Activated CD4-positive, alpha-beta T cell treated with anti-CD3 and anti-CD28 coated beads for 36 hours (primary cell): ENCODE measurements at regions of chr14 and their contacts with region 1.

Region 1: GRCh38 chr14:61662437-61663311 is 32.6 kb upstream of the HIF1A start:
- DNase-seq: peak; percentile 73
- ATAC-seq: peak; percentile 84
- H3K4me3 Mint-ChIP-seq: peak overlapping the region; percentile 46
- H3K27ac Mint-ChIP-seq: peak overlapping the region; percentile 91
- H3K4me1 Mint-ChIP-seq: peaks cover 67% of the 10 kb centered on the region
- H3K27me3 Mint-ChIP-seq: no peaks in the 10 kb centered on the region

Region 2: GRCh38 chr14:61178226-61179060 is 484.2 kb before region 1 on chr14:
- CTCF ChIA-PET with region 1: no interaction called
- POLR2A ChIA-PET with region 1: no interaction called
- intact Hi-C with region 1: loop called in 1 of 2 experiments (anchors 5 kb)
- DNase-seq: peak; percentile 85
- ATAC-seq: peak; percentile 82
- H3K4me3 Mint-ChIP-seq: peak overlapping the region; percentile 38
- H3K27ac Mint-ChIP-seq: peak overlapping the region; percentile 88
- H3K4me1 Mint-ChIP-seq: peaks cover 52% of the 10 kb centered on the region
- H3K27me3 Mint-ChIP-seq: peaks cover 4% of the 10 kb centered on the region

Region 3: DNA sequence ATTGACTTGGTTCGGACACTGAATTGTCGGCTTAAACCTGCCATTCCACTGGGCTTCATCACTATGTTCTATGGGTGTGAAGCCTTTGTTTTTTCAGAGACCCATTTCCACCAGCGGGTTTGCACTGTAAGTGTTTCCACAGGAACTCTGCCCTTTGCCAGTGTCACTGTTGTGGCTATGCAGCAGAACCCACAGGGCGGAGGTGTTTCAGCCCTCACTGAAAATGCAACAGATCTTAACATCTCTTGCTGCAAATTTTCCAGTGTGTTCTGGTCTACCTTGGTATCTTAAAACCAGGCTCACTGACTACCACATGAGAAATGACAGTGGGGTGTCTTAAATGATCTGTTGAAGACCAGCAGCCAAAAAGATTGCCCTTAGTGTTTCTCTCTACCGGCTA is 320.2 kb before region 1 on chr14:
- CTCF ChIA-PET with region 1: no interaction called
- POLR2A ChIA-PET with region 1: no interaction called
- intact Hi-C with region 1: loop called in 1 of 2 experiments (anchors 2 kb)
- DNase-seq: peak; percentile 91
- ATAC-seq: peak; percentile 60
- H3K4me3 Mint-ChIP-seq: peak overlapping the region; percentile 86
- H3K27ac Mint-ChIP-seq: peak overlapping the region; percentile 99
- H3K4me1 Mint-ChIP-seq: peaks cover 94% of the 10 kb centered on the region
- H3K27me3 Mint-ChIP-seq: no peaks in the 10 kb centered on the region

Region 4: DNA sequence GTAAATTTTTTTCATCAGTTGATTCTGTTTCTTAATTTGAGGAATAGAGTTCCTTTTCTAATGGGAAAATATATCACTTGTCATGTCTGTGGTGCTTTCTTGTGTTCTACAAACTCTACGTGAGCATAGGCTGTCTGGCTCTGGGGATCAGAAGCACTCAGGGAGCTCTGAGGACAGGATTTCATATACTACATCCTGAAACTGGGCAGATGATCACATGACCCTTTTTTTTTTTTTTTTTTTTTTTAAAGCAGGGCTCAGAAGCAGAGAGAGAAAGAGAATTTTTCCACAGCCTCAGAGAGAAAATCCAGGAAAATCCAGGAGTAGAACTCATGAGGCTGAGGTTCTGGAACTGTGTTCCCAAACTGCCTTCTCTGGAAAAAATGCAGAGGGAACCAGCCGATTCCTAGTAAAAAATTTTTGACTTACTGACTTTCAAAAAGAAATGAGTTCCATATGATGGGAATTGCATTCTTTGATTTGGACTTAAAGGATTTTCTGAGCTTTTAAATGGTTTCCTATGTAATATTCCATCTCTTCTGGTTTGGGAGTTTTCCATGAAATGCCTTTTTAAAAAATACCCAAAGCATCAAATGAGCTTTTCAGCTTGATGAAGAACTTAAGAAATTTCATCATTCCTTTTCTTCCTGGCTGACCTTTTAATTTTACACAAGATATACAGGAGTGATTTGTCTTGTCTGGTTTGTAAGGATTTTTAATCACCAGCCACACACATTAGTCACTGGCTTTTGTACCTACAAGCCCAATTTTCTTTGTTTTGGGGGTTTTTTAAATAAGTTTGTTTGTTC is 150.4 kb before region 1 on chr14:
- CTCF ChIA-PET with region 1: interaction called, 3 read pairs
- POLR2A ChIA-PET with region 1: no interaction called
- intact Hi-C with region 1: loop called in 1 of 2 experiments (anchors 1 kb)
- DNase-seq: peak; percentile 44
- ATAC-seq: peak; percentile 59
- H3K4me3 Mint-ChIP-seq: peak overlapping the region; percentile 54
- H3K27ac Mint-ChIP-seq: peak overlapping the region; percentile 97
- H3K4me1 Mint-ChIP-seq: peaks cover 94% of the 10 kb centered on the region
- H3K27me3 Mint-ChIP-seq: no peaks in the 10 kb centered on the region

Region 5: GRCh38 chr14:61568572-61569131 is 94.0 kb before region 1 on chr14:
- CTCF ChIA-PET with region 1: interaction called, 7 read pairs
- POLR2A ChIA-PET with region 1: no interaction called
- intact Hi-C with region 1: loop called (anchors 1 to 2 kb)
- DNase-seq: peak; percentile 77
- ATAC-seq: peak; percentile 50
- H3K4me3 Mint-ChIP-seq: peak overlapping the region; percentile 47
- H3K27ac Mint-ChIP-seq: peak overlapping the region; percentile 85
- H3K4me1 Mint-ChIP-seq: peaks cover 80% of the 10 kb centered on the region
- H3K27me3 Mint-ChIP-seq: peaks cover 3% of the 10 kb centered on the region

Region 6: DNA sequence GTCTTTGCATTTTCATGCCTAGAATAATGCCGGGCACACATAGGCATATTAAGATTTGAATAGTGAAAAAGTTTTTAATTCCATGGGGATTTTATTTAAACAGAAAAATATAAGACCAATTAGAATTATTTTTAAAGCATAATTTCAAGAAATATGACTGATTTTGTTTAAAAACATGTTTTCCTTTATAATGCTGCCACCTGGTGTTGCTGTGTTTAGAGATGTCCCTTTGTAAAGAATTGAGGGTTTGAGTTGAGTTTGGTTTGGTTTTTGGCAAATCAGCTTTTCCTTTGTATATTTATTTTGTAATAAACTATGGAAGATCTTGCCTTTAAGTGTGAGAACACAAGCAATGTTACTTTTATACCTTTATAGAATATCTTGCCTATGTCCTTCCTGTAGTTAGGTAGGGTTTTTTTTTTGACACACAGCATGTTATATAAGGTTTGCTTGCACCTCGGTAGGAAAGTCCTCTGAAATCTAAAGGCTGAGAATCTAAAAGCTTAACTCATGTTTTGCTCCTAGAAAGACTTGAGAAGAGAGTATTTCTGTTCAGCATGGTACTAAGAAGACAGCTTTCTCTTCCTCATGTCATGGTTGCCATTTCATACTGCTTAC is 68.2 kb after region 1 on chr14:
- CTCF ChIA-PET with region 1: no interaction called
- POLR2A ChIA-PET with region 1: no interaction called
- intact Hi-C with region 1: loop called in 1 of 2 experiments (anchors 2 kb)
- DNase-seq: no peak
- ATAC-seq: no peak
- H3K4me3 Mint-ChIP-seq: no peak overlapping the region
- H3K27ac Mint-ChIP-seq: peak overlapping the region; percentile 48
- H3K4me1 Mint-ChIP-seq: peaks cover 43% of the 10 kb centered on the region
- H3K27me3 Mint-ChIP-seq: no peaks in the 10 kb centered on the region